Panc1 (cell line): ENCODE measurements at regions of chr7 and their contacts with region 1.

Region 1: DNA sequence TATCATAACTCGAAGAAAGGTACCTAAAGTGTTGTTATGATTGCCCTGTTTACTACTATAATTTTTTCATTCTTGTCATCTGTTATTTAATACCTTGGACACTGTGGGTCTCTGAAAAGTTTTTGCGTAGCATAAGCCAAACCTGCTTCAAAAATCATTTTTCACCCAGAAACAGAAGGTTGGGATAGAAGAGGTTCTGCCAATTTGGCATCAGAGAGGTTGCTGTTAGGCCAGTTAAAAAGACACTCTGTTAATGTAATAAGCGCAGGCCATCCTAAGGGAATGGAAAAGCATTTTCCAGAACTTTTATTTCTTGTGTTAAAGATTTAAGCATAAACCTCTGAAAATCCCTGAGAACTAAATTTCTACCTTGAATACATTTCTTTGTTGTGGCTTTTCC is 212.2 kb downstream of the BMPER start:
- DNase-seq: no peak
- ATAC-seq: no peak
- H3K4me3 ChIP-seq: no peak overlapping the region
- H3K27ac ChIP-seq: no peak overlapping the region
- H3K4me1 ChIP-seq: no peaks in the 10 kb centered on the region
- H3K27me3 ChIP-seq: no peaks in the 10 kb centered on the region
- CTCF ChIP-seq: no peak

Region 2: GRCh38 chr7:35380739-35381224 is 1263.2 kb after region 1 on chr7:
- CTCF ChIA-PET with region 1: no interaction called
- POLR2A ChIA-PET with region 1: interaction called, 13 read pairs
- in situ Hi-C with region 1: no loop called
- intact Hi-C with region 1: no loop called
- DNase-seq: no peak
- ATAC-seq: no peak
- H3K4me3 ChIP-seq: no peak overlapping the region
- H3K27ac ChIP-seq: no peak overlapping the region
- H3K4me1 ChIP-seq: no peaks in the 10 kb centered on the region
- H3K27me3 ChIP-seq: peaks cover 17% of the 10 kb centered on the region
- CTCF ChIP-seq: no peak